ENCODE measurements at regions of chr6 and their contacts with region 1.

Region 1: GRCh38 chr6:31702819-31703522 is at the start of gene ABHD16A:
- DNase-seq: peak; percentile 99
- H3K4me3 Mint-ChIP-seq: peak within 1 kb of the TSS; percentile 99
- H3K27ac Mint-ChIP-seq: peak within 1 kb of the TSS; percentile 97
- H3K4me1 Mint-ChIP-seq: peaks cover 22% of the 10 kb centered on the region
- H3K27me3 Mint-ChIP-seq: no peaks in the 10 kb centered on the region
- total RNA-seq, gene ABHD16A: 19.9 to 22.5 TPM

Region 2: DNA sequence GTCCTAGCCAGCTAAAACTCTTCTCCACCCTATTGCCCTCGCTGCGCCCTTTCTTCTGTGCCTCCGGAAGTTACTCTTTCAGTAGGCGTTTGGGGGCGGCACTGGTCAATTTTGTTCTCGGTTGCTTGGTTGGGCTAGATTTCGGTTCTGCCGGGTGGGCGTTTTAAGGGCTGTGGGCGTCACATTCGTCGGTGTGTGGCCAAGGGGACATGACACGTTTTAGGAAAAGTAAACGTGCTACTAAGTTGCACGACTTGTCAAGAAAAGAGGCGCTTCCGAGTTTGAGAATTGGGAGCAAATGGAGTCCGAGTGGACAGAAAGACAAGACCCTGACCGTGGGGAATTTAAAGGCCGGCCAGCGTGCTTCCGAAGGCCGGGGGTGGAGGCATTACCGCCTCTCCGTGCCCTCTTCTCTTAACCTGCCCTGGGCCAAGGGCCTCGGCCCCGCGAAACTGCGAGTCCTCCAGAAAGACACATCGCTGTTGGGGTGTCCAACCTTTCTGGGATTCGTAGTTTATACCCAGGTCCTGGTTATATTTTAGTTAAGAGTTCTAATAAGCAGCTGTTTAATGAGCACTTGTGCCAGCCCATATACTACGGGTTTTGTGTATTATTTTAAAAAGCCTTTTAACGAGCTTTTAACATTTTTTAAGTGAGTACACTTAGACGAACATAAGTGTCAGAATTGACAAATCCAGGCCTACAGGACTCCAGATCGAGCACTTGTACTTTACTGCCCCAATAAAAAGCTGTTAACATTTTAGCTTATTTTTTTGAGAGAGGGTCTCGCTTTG is 49.8 kb before region 1 on chr6:
- CTCF ChIA-PET with region 1: no interaction called
- intact Hi-C with region 1: loop called (anchors 1 kb)
- DNase-seq: peak; percentile 92
- H3K4me3 Mint-ChIP-seq: peak overlapping the region; percentile 96
- H3K27ac Mint-ChIP-seq: peak overlapping the region; percentile 98
- H3K4me1 Mint-ChIP-seq: peaks cover 44% of the 10 kb centered on the region
- H3K27me3 Mint-ChIP-seq: no peaks in the 10 kb centered on the region